ENCODE measurements at regions of chr7 and their contacts with region 1.

Region 1: GRCh38 chr7:50446542-50446960 is 3.6 kb downstream of the FIGNL1 start:
- DNase-seq: peak; percentile 81 to 86
- H3K4me3 ChIP-seq: no peak overlapping the region
- H3K4me3 Mint-ChIP-seq: peak overlapping the region; percentile 32
- H3K27ac Mint-ChIP-seq: peak overlapping the region; percentile 68
- H3K4me1 ChIP-seq: peaks cover 27% of the 10 kb centered on the region
- H3K4me1 Mint-ChIP-seq: peaks cover 21% of the 10 kb centered on the region
- H3K27me3 ChIP-seq: no peaks in the 10 kb centered on the region
- H3K27me3 Mint-ChIP-seq: no peaks in the 10 kb centered on the region
- CTCF ChIP-seq: no peak

Region 2: DNA sequence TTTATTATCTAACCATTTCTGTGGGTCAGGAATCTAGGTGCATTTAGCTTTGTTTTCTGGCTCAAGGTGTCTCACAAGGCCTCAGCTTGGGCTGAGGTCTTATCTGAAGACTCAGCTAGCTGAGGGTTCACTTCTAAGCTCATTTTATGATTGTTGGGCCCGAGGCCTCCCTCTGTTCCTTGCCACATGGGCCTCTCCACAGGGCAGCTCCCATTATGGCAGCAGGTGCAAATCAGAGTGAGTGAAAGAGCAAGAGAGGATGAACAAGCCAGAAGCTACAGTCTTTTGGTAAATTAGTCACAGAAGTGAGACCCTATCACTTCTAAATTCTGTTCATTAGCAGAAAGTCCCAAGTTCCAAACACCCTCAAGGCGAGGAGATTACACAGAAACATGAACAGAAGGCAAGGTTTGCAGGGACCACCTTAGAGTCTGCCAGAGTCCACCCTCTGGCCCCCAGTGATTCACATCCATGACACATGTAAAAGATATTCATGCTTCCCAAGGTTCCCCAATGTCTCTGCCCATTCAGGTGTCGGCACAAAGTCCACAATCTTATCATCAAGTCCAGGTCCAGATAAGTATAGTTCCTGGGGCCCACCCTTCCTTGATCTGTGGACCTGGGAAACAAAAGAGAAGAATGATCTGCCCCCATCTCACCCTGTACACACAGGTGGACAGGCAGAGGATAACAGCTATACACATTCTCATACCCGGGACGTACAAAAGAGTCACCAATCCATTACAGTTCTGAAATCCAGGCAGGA is 20.1 kb before region 1 on chr7:
- CTCF ChIA-PET with region 1: interaction called, 3 read pairs
- POLR2A ChIA-PET with region 1: interaction called, 3 read pairs
- intact Hi-C with region 1: loop called (anchors 1 kb)
- DNase-seq: peak; percentile 81 to 88
- H3K4me3 ChIP-seq: no peak overlapping the region
- H3K4me3 Mint-ChIP-seq: peak overlapping the region; percentile 25
- H3K27ac Mint-ChIP-seq: peak overlapping the region; percentile 78
- H3K4me1 ChIP-seq: peaks cover 30% of the 10 kb centered on the region
- H3K4me1 Mint-ChIP-seq: peaks cover 35% of the 10 kb centered on the region
- H3K27me3 ChIP-seq: no peaks in the 10 kb centered on the region
- H3K27me3 Mint-ChIP-seq: no peaks in the 10 kb centered on the region
- CTCF ChIP-seq: no peak

Measured in Caco-2 (cell line).